ENCODE measurements at regions of chr6 and their contacts with region 1.

Region 1: GRCh38 chr6:41677124-41677921 is 39.1 kb downstream of the MDFI start:
- DNase-seq: no peak
- H3K4me3 ChIP-seq: no peak overlapping the region
- H3K27ac ChIP-seq: no peak overlapping the region
- H3K4me1 ChIP-seq: peaks cover 0 to 7% (median 4%) of the 10 kb centered on the region in 4 experiments
- H3K27me3 ChIP-seq: no peaks in the 10 kb centered on the region

Region 2: DNA sequence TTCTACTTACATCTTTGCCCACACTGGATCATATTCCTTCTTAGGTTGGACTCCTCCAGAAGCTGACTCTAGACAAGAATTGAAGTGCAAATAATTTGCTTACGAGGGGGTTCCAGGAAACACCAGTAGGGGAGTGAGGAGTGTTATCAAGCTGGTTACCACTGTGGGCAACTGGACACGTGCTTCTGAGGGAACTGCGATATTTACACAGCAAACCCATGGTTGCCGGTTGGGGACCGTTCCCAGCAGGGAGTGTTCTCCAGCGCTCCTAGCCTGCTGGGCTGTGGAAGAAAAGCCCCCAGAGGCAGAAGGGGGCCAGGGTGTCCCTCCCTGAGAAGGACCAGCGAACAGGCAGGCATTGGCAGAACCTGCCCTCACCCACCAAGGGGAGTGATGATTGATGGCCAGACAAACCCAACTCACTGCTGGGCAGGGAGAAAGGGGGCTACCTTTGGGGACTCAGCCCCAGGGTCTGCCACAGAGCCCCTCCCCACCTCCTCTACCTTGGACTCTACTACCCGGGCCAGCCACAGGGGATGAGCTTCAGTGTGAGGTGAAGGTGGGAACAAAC is 17.3 kb before region 1 on chr6:
- CTCF ChIA-PET with region 1: interaction called, 12 read pairs
- POLR2A ChIA-PET with region 1: no interaction called
- DNase-seq: peak; percentile 40 to 73 (median 66)
- H3K4me3 ChIP-seq: no peak overlapping the region
- H3K27ac ChIP-seq: no peak overlapping the region
- H3K4me1 ChIP-seq: peaks cover 0 to 28% (median 23%) of the 10 kb centered on the region in 4 experiments
- H3K27me3 ChIP-seq: no peaks in the 10 kb centered on the region

Region 3: GRCh38 chr6:41697861-41698781 is 20.8 kb after region 1 on chr6:
- CTCF ChIA-PET with region 1: no interaction called
- POLR2A ChIA-PET with region 1: no interaction called
- DNase-seq: no peak
- H3K4me3 ChIP-seq: no peak overlapping the region
- H3K27ac ChIP-seq: no peak overlapping the region
- H3K4me1 ChIP-seq: peaks cover 0 to 6% (median 0%) of the 10 kb centered on the region in 4 experiments
- H3K27me3 ChIP-seq: no peaks in the 10 kb centered on the region